ENCODE measurements at regions of chr1 and their contacts with region 1.

Region 1: GRCh38 chr1:203124546-203125317 is 2.8 kb upstream of the ADORA1 start:
- DNase-seq: no peak
- H3K4me3 ChIP-seq: no peak overlapping the region
- H3K27ac ChIP-seq: no peak overlapping the region
- H3K4me1 ChIP-seq: peaks cover 16 to 31% of the 10 kb centered on the region in 2 donors
- H3K27me3 ChIP-seq: no peaks in the 10 kb centered on the region
- CTCF ChIP-seq: no peak
- POLR2A ChIP-seq: no peak

Region 2: GRCh38 chr1:203163891-203164635 is 39.3 kb after region 1 on chr1:
- intact Hi-C with region 1: loop called (anchors 5 kb)
- DNase-seq: no peak
- H3K4me3 ChIP-seq: no peak overlapping the region
- H3K27ac ChIP-seq: no peak overlapping the region
- H3K4me1 ChIP-seq: peaks cover 4 to 8% of the 10 kb centered on the region in 2 donors
- H3K27me3 ChIP-seq: no peaks in the 10 kb centered on the region
- CTCF ChIP-seq: no peak
- POLR2A ChIP-seq: no peak

Measured in thyroid gland (tissue), 4 donors.